Naive thymus-derived CD4-positive, alpha-beta T cell (primary cell): ENCODE measurements at regions of chrX and their contacts with region 1.

Region 1: GRCh38 chrX:1468250-1468772 is 15.6 kb upstream of the ASMTL start:
- DNase-seq: peak; percentile 44 to 77 (median 60)
- ATAC-seq: peak; percentile 55
- H3K4me3 ChIP-seq: no peak overlapping the region
- H3K4me3 Mint-ChIP-seq: peak overlapping the region; percentile 51 to 87 (median 74)
- H3K27ac ChIP-seq: peak overlapping the region; percentile 71
- H3K27ac Mint-ChIP-seq: peak overlapping the region; percentile 90 to 98 (median 97)
- H3K4me1 ChIP-seq: peaks cover 83 to 86% of the 10 kb centered on the region in 2 donors
- H3K4me1 Mint-ChIP-seq: peaks cover 36 to 92% (median 84%) of the 10 kb centered on the region in 7 donors
- H3K27me3 ChIP-seq: no peaks in the 10 kb centered on the region
- H3K27me3 Mint-ChIP-seq: no peaks in the 10 kb centered on the region

Region 2: GRCh38 chrX:1140236-1140681 is 328.1 kb before region 1 on chrX:
- CTCF ChIA-PET with region 1: no interaction called
- POLR2A ChIA-PET with region 1: no interaction called
- intact Hi-C with region 1: no loop called
- DNase-seq: no peak
- ATAC-seq: no peak
- H3K4me3 ChIP-seq: no peak overlapping the region
- H3K4me3 Mint-ChIP-seq: no peak overlapping the region
- H3K27ac ChIP-seq: no peak overlapping the region
- H3K27ac Mint-ChIP-seq: no peak overlapping the region
- H3K4me1 ChIP-seq: no peaks in the 10 kb centered on the region
- H3K4me1 Mint-ChIP-seq: no peaks in the 10 kb centered on the region
- H3K27me3 ChIP-seq: no peaks in the 10 kb centered on the region
- H3K27me3 Mint-ChIP-seq: peaks cover 0 to 6% (median 0%) of the 10 kb centered on the region in 5 donors

Region 3: DNA sequence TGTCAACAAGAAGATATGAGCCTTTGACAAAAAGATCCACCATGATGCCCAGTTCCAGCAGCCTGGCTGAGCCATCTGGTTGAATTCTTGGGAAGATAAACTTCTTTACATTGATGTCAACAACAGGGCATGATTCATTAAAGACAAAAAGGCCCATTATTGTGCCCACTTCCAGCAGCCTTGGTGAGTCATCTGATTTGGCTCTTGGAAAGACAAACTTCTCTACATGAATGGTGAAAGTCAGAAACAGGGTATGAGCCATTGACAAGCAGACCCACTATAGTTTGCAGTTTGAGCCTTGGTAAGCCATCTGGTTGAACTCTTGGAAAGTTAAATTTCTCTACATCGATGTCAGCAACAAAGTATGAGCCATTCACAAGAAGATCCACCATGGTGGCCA is 203.8 kb before region 1 on chrX:
- CTCF ChIA-PET with region 1: no interaction called
- POLR2A ChIA-PET with region 1: no interaction called
- intact Hi-C with region 1: no loop called
- DNase-seq: no peak
- ATAC-seq: no peak
- H3K4me3 ChIP-seq: no peak overlapping the region
- H3K4me3 Mint-ChIP-seq: no peak overlapping the region
- H3K27ac ChIP-seq: no peak overlapping the region
- H3K27ac Mint-ChIP-seq: no peak overlapping the region
- H3K4me1 ChIP-seq: peaks cover 5 to 14% of the 10 kb centered on the region in 2 donors
- H3K4me1 Mint-ChIP-seq: peaks cover 18 to 32% (median 28%) of the 10 kb centered on the region in 7 donors
- H3K27me3 ChIP-seq: no peaks in the 10 kb centered on the region
- H3K27me3 Mint-ChIP-seq: no peaks in the 10 kb centered on the region

Region 4: DNA sequence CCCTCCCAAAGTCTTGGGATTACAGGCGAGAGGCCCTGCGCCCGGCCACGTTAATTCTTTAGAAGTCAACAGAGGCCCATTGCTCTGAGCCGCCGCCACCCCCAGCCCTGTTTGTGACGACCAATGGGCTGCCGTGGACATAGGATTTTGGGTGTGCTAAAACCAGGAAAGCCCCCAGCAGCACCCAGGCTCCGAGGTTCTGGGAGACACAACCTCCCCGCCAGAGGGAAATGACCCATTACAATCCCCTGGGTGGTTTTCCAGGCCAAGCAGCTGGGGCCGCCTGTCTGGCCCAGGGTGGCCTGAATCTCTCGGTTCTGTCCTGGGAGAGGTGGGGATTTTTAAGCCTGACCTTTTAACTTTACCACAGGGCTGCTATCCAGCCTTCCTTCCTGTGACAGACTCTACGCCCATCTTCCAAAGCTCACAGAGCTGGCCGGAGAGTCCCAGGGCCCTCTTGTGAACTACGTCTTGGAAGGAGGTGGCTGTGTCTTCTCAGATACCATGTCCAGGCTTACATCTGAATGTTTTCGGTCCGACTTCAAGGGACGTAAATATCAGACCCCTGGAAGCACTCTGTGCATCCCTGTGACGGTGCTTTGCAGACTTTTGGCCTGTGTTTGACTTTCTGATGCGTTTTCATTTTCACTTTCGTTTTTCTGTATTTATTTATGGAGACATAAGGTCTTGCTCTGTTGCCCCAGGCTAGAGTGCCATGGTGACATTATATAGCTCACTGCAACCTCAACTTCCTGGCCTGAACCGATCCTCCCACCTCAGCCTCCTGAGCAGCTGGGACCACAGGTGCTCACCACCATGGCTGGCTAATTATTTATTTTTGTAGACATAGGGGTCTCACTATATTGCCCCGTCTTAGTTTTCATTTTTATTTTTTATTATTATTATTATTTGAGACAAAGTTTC is 32.7 kb after region 1 on chrX:
- CTCF ChIA-PET with region 1: no interaction called
- POLR2A ChIA-PET with region 1: no interaction called
- intact Hi-C with region 1: loop called in 1 of 2 experiments (anchors 1 kb)
- DNase-seq: peak in 1 of 9 donors; percentile 42
- ATAC-seq: peak; percentile 23
- H3K4me3 ChIP-seq: peak overlapping the region; percentile 24
- H3K4me3 Mint-ChIP-seq: peak overlapping the region in 6 of 10 donors; percentile 12 to 68 (median 46)
- H3K27ac ChIP-seq: peak overlapping the region; percentile 9
- H3K27ac Mint-ChIP-seq: peak overlapping the region; percentile 58 to 94 (median 81)
- H3K4me1 ChIP-seq: peaks cover 7 to 11% of the 10 kb centered on the region in 2 donors
- H3K4me1 Mint-ChIP-seq: peaks cover 10 to 46% (median 34%) of the 10 kb centered on the region in 7 donors
- H3K27me3 ChIP-seq: no peaks in the 10 kb centered on the region
- H3K27me3 Mint-ChIP-seq: no peaks in the 10 kb centered on the region